Stomach (tissue), 19 donors: ENCODE measurements at regions of chr3 and their contacts with region 1.

Region 1: DNA sequence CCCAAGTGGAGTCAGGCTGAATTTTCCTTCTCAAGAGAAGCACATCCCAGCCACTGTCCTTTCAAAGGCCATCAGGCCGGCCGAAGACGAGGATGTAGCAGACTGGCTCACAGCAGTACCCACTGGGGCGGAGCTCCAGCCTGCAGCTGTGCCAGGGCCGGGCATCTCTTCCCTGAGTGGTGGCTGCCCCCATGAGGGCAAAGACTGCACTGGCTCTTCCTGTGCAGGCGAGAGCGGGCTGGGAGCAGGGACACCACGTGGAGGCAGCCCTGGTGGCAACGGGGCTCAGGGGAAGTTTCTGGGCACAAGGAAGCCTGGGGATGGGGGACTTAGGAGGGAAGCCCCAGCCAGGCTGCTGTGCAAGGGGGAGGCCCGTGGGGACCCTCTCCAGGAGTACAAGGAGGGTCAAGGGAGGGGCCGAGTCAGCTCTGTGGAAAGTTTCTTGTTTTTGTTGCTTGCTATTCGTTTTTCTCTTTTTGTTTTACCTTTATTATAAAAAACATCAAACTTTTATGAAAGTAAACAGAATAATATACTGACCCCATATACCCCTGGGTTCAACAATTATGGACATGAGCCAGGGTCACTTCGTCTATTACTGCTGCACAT is 66.1 kb downstream of the RPN1 start:
- DNase-seq: peak; percentile 71 to 87
- H3K4me3 ChIP-seq: no peak overlapping the region
- H3K27ac ChIP-seq: no peak overlapping the region
- H3K4me1 ChIP-seq: peaks cover 0 to 6% (median 0%) of the 10 kb centered on the region in 4 donors
- H3K27me3 ChIP-seq: peaks cover 0 to 27% (median 8%) of the 10 kb centered on the region in 3 donors
- CTCF ChIP-seq: peak in 5 of 7 experiments; percentile 29 to 72 (median 50)
- EP300 ChIP-seq: no peak
- POLR2A ChIP-seq: no peak

Region 2: GRCh38 chr3:128438488-128439072 is 145.9 kb before region 1 on chr3:
- intact Hi-C with region 1: loop called (anchors 10 kb)
- DNase-seq: no peak
- H3K4me3 ChIP-seq: no peak overlapping the region
- H3K27ac ChIP-seq: no peak overlapping the region
- H3K4me1 ChIP-seq: peaks cover 0 to 10% (median 5%) of the 10 kb centered on the region in 4 donors
- H3K27me3 ChIP-seq: peaks cover 0 to 46% (median 4%) of the 10 kb centered on the region in 3 donors
- CTCF ChIP-seq: no peak
- EP300 ChIP-seq: no peak
- POLR2A ChIP-seq: no peak